ENCODE measurements at regions of chr13 and their contacts with region 1.

Region 1: DNA sequence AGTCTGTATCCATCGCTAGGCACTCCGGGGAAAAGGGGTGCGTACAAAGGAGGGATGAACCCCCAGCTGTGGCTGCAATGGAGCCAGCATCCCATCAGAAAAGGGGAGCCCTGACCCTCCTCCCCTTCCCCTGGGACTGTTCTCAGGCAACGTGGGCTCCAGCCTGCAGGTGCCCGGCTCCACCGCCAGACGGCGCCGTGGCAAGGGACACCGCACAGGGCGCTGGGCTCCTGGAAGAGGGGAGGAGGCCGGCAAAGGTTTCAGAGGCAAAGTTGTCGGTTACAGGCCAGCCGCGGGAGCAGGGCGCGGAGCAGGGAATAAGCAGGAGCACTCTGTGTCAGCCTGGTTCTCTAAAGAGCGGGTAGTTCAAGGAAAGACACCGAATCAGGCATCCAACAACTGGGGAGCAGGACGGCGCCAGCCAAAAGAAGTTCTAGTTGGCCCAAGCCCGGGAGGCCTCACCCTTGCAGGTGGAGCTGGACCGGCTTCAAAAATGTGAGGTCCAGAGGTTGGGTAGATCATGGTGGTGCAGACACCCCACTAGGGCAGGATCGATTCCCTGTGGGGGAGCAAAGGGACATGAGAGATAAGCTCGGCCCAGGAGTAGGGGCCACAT is 53.0 kb upstream of the ATP12A start:
- DNase-seq: peak; percentile 46 to 94
- H3K4me3 ChIP-seq: no peak overlapping the region
- H3K27ac ChIP-seq: no peak overlapping the region
- H3K4me1 ChIP-seq: peaks cover 0 to 9% (median 2%) of the 10 kb centered on the region in 4 experiments; a peak in 3 of 7 replicates
- H3K27me3 ChIP-seq: peaks cover 0 to 5% (median 1%) of the 10 kb centered on the region in 4 experiments; a peak in 2 of 7 replicates
- CTCF ChIP-seq: peak; percentile 97 to 99 (median 98)
- EP300 ChIP-seq: peak in 1 of 2 experiments; percentile 21; a peak in 1 of 3 replicates
- POLR2A ChIP-seq: no peak
- RAD21 ChIP-seq: peak; percentile 80 to 87

Region 2: DNA sequence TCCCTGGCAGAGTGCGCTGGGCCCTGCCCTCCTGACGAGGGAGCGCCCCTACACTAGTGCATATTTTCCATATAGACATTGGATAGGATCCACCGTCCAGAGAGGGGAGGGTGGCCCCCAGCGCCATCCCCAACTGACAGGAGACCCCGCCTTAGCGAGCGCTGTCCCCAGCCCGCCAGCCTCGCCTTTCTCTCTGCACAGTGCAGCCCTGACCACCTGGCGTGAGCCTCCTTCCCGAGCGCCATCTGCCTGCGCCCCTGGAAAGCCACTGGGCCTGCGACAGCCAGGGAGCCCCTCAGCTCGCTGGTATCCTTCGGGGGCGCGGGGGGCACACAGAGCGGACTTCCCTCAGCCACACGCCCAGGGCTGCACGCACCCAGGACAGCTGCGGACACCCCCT is 10.9 kb after region 1 on chr13:
- CTCF ChIA-PET with region 1: interaction called, 17 read pairs
- POLR2A ChIA-PET with region 1: no interaction called
- DNase-seq: no peak
- H3K4me3 ChIP-seq: no peak overlapping the region
- H3K27ac ChIP-seq: no peak overlapping the region
- H3K4me1 ChIP-seq: no peaks in the 10 kb centered on the region; a peak in 1 of 7 replicates
- H3K27me3 ChIP-seq: no peaks in the 10 kb centered on the region
- CTCF ChIP-seq: no peak
- EP300 ChIP-seq: no peak
- POLR2A ChIP-seq: no peak
- RAD21 ChIP-seq: no peak

Region 3: DNA sequence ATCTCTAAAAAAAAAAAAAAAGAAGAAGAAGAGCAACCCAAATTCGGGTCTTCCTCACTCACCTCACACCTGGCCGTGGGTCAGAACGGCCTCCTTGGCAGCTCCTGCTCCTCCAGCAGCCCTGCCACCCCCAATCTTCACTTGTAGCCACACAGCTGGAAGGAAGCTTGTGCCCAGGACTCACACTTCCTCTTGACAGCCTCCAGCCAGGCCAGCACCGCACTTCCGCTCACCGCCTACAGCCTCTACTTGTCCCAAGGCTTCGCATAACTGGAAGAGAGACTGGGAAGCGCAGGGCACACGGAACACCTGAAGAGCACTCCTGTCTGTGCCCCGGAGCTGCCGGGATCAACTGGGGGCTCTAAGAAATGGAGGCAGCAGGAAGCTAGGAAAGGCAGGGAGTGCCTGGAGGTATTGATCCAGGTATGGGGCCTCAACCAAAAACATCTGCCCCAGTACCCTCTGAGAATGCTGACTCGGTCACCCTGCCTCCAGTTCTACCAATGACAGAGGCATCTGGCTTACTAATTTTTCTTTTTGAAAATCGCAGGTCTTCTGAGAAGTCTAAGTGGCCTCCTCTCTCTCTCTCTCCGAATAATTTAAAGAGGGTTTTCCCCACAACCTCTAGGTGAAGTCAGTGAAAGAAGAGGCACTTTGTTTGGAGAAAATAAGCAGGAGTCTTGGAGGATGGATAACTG is 21.9 kb after region 1 on chr13:
- CTCF ChIA-PET with region 1: interaction called, 14 read pairs
- POLR2A ChIA-PET with region 1: no interaction called
- DNase-seq: no peak
- H3K4me3 ChIP-seq: no peak overlapping the region
- H3K27ac ChIP-seq: no peak overlapping the region
- H3K4me1 ChIP-seq: peaks cover 0 to 4% (median 3%) of the 10 kb centered on the region in 4 experiments; a peak in 3 of 7 replicates
- H3K27me3 ChIP-seq: no peaks in the 10 kb centered on the region
- CTCF ChIP-seq: no peak
- EP300 ChIP-seq: no peak
- POLR2A ChIP-seq: no peak
- RAD21 ChIP-seq: no peak

Region 4: DNA sequence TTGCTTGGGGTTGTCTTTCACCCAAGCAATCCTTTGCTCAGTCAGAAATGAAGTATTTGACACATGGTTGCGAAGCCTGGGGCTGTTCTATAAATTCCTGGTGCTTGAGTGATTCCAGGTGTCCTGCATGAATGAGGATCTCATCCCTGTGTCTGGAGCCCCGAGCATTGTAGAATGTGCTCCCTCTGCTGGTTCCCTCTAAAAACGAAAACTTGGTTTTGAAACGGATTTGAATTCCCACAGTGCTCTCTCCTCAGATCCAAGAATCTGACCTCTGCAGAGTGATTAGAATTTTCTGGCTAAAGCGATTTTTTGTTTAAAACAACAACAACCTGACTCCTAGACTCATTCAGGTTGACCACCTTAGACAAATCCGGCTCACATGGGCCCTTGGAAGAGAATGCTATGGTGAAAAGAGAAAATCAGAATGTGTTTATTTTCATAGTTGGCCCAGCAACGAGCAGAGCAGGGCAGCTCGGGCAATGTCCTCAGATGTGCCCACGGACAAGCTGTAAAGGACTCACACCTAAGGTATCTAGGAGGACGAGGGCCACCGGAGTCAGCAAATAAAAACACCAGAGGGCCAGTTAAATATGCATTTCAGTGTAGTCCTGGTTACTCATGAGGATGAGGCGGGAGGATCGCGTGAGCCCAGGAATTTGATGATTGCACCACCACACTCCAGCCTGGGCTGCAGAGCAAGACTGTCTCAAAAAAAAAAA is 44.3 kb after region 1 on chr13:
- CTCF ChIA-PET with region 1: interaction called, 65 read pairs
- POLR2A ChIA-PET with region 1: no interaction called
- DNase-seq: no peak
- H3K4me3 ChIP-seq: peak overlapping the region in 1 of 4 experiments; percentile 41; a peak in 3 of 8 replicates
- H3K27ac ChIP-seq: no peak overlapping the region
- H3K4me1 ChIP-seq: peaks cover 0 to 4% (median under 1%) of the 10 kb centered on the region in 4 experiments; a peak in 2 of 7 replicates
- H3K27me3 ChIP-seq: no peaks in the 10 kb centered on the region
- CTCF ChIP-seq: peak; percentile 17 to 79 (median 75)
- EP300 ChIP-seq: no peak
- POLR2A ChIP-seq: no peak
- RAD21 ChIP-seq: peak; percentile 57 to 67

Region 5: DNA sequence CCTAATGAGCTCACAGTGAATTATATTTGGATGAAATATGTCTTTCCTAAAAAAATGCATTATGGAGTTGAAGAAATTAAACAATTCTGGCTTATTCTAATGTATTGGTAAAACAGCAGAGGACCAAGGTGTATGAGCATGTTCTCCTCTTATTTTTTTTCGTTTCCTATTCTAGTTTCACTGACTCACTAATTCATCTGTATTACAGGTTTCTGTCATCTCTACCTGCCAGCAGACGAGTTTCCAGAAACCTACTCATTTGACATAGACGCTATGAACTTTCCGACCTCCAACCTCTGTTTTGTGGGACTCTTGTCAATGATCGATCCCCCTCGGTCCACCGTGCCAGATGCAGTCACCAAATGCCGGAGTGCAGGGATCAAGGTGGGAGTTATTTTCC is 73.3 kb after region 1 on chr13:
- CTCF ChIA-PET with region 1: no interaction called
- POLR2A ChIA-PET with region 1: no interaction called
- DNase-seq: no peak
- H3K4me3 ChIP-seq: no peak overlapping the region
- H3K27ac ChIP-seq: no peak overlapping the region
- H3K4me1 ChIP-seq: no peaks in the 10 kb centered on the region; a peak in 1 of 7 replicates
- H3K27me3 ChIP-seq: no peaks in the 10 kb centered on the region
- CTCF ChIP-seq: no peak
- EP300 ChIP-seq: no peak
- POLR2A ChIP-seq: no peak
- RAD21 ChIP-seq: no peak

Measured in H1 (cell line).